ENCODE measurements at regions of chr11 and their contacts with region 1.

Region 1: GRCh38 chr11:22829231-22830081 is at the start of gene SVIP:
- DNase-seq: peak; percentile 86
- ATAC-seq: peak; percentile 97
- H3K4me3 Mint-ChIP-seq: peak within 1 kb of the TSS; percentile 94
- H3K27ac Mint-ChIP-seq: peak within 1 kb of the TSS; percentile 84
- H3K4me1 Mint-ChIP-seq: peaks cover 14% of the 10 kb centered on the region
- H3K27me3 Mint-ChIP-seq: no peaks in the 10 kb centered on the region
- CTCF ChIP-seq: no peak
- total RNA-seq, gene SVIP: 16.9 and 22.1 TPM in 2 replicates

Region 2: DNA sequence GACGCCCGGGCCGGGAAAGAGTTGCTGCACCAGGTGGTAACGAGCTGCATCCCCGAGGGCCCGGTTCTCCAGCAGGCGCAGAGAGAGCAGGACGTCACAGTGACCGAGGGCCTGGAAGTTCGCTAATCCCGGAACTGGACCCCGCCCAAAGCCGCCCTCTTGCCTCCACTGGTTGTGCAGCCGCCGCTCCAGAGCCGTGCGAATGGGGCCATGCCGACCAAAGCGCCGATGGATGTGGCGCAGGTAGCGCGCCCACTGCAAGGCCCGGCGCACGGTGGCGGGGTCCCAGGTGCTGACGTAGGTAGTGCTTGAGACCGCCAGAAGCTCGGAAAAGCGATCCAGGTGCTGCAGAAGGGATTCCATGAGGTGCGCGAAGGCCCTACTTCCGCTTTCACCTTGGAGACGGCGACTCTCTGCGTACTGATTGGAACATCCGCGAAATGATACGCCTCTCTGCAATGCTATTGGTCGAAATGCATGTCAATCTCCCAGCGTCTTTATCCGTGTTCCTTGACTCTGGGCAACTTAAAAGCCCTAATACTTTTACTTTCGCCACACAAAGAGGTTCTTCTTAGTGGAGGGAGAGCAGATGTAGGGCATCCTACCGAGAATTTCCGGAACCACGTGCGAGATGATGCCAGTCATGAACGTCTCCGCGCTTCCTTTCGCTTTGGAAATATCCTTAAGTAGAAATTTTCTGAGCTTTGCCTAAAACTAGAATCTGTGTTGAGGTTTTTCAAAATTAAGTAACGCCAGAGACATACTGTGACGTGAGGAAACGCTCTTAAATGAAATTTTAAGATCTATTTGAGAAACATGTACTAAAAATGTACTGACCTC is 203.8 kb before region 1 on chr11 and contains the start of gene FANCF:
- CTCF ChIA-PET with region 1: no interaction called
- POLR2A ChIA-PET with region 1: interaction called, 15 read pairs
- intact Hi-C with region 1: loop called (anchors 1 kb)
- DNase-seq: peak; percentile 78
- ATAC-seq: peak; percentile 94
- H3K4me3 Mint-ChIP-seq: peak within 1 kb of the TSS; percentile 100
- H3K27ac Mint-ChIP-seq: peak within 1 kb of the TSS; percentile 99
- H3K4me1 Mint-ChIP-seq: peaks cover 42% of the 10 kb centered on the region
- H3K27me3 Mint-ChIP-seq: no peaks in the 10 kb centered on the region
- CTCF ChIP-seq: no peak
- total RNA-seq, gene FANCF: 21.1 and 21.9 TPM in 2 replicates

Region 3: DNA sequence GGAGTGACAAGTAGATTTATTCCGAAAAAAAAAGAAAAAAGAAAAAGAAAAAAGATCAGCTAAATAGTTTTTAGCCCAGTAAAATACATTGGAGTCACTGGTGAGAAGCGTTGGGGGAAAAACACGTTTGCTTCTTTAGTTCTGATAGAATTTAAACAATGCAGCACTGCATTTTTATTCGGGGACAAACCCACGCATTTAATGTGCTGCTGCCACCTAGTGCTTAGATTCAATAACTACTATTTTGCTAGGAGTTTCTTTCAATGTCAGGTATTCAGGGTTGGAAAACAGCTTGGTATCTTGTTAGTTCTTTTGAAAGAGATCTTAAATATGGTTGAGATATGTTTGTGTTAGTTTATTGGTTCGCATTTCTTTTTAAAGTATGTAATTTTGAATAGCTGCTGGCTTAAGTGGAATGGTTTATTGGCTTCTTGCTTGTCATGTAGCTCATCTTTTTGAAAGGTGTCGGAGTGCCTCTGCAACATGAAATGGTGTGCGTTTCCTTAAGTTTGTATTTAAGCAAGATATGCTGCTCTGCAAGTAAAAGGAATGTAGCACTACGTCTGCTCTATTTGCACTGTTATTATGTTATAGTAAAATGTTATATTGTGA is 41.8 kb before region 1 on chr11:
- CTCF ChIA-PET with region 1: interaction called, 11 read pairs
- POLR2A ChIA-PET with region 1: no interaction called
- intact Hi-C with region 1: loop called (anchors 1 kb)
- DNase-seq: no peak
- ATAC-seq: peak; percentile 40
- H3K4me3 Mint-ChIP-seq: no peak overlapping the region
- H3K27ac Mint-ChIP-seq: no peak overlapping the region
- H3K4me1 Mint-ChIP-seq: no peaks in the 10 kb centered on the region
- H3K27me3 Mint-ChIP-seq: peaks cover 3% of the 10 kb centered on the region
- CTCF ChIP-seq: peak; percentile 65